ENCODE measurements at regions of chr22 and their contacts with region 1.

Region 1: GRCh38 chr22:40950962-40951794 is at the start of gene RBX1:
- DNase-seq: peak; percentile 98 to 100
- ATAC-seq: peak; percentile 81 to 94 (median 81)
- H3K4me3 ChIP-seq: peak within 1 kb of the TSS; percentile 98
- H3K4me3 Mint-ChIP-seq: peak within 1 kb of the TSS; percentile 99
- H3K27ac ChIP-seq: peak within 1 kb of the TSS; percentile 99
- H3K27ac Mint-ChIP-seq: peak within 1 kb of the TSS; percentile 98 to 100
- H3K4me1 ChIP-seq: peaks cover 23% of the 10 kb centered on the region
- H3K4me1 Mint-ChIP-seq: peaks cover 22 to 31% of the 10 kb centered on the region in 2 donors
- H3K27me3 ChIP-seq: no peaks in the 10 kb centered on the region
- H3K27me3 Mint-ChIP-seq: no peaks in the 10 kb centered on the region
- CTCF ChIP-seq: no peak
- total RNA-seq, gene RBX1: 27.1 to 34.3 (median 28.5) TPM

Region 2: GRCh38 chr22:40862537-40862936 is 88.6 kb before region 1 on chr22:
- intact Hi-C with region 1: no loop called
- DNase-seq: no peak
- ATAC-seq: no peak
- H3K4me3 ChIP-seq: no peak overlapping the region
- H3K4me3 Mint-ChIP-seq: no peak overlapping the region
- H3K27ac ChIP-seq: no peak overlapping the region
- H3K27ac Mint-ChIP-seq: no peak overlapping the region
- H3K4me1 ChIP-seq: peaks cover 4% of the 10 kb centered on the region
- H3K4me1 Mint-ChIP-seq: peaks cover 2 to 7% of the 10 kb centered on the region in 2 donors
- H3K27me3 ChIP-seq: no peaks in the 10 kb centered on the region
- H3K27me3 Mint-ChIP-seq: no peaks in the 10 kb centered on the region
- CTCF ChIP-seq: no peak

Region 3: DNA sequence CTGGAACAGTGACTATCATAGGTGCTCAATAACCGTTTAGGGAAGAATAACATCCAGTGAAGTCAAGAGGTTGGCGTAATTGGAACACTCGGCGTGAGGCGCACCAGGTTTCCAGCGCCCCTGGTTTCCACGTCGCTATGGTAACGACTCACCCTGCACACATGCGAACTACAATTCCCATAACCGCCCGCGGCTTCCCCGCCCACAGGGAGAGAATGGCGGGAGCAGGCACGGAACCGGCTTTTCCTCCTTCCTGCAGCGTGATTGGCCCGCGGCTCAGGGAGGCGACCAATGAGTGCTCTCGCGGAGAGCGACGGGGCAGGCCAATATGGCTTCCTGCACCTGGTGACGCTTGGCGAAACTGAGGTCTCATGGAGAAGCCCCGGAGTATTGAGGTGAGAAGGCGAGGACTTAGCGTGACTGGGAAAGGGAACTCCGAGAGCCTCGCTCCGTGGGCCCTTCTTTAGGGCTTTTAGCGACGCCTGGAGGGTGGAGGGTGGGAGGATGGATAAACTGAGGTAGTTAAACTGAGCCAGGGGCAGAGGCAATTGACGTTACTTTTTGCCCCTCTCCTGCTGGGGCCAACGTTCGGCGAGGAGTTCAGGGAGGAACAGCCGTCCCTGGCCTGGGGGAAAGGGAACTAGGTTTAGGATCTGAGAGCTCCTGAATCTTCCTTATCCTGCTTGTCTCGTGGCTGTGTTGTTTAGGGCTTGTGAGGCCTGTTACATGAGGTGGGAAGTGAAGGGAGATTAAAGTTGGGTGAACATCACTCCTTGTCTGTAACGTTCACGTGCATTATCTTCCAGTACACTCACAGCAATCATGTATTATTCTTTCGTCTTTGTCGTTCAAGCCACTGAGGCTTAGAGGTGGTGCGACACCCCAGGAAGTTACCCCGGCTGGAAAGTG is 254.1 kb after region 1 on chr22 and contains the start of gene L3MBTL2:
- intact Hi-C with region 1: loop called (anchors 2 kb)
- DNase-seq: peak; percentile 94 to 99
- ATAC-seq: peak; percentile 99 to 100 (median 100)
- H3K4me3 ChIP-seq: peak within 1 kb of the TSS; percentile 73
- H3K4me3 Mint-ChIP-seq: peak within 1 kb of the TSS; percentile 97
- H3K27ac ChIP-seq: peak within 1 kb of the TSS; percentile 56
- H3K27ac Mint-ChIP-seq: peak within 1 kb of the TSS; percentile 88 to 92
- H3K4me1 ChIP-seq: peaks cover 17% of the 10 kb centered on the region
- H3K4me1 Mint-ChIP-seq: peaks cover 14 to 20% of the 10 kb centered on the region in 2 donors
- H3K27me3 ChIP-seq: no peaks in the 10 kb centered on the region
- H3K27me3 Mint-ChIP-seq: peaks cover 0 to 9% of the 10 kb centered on the region in 2 donors
- CTCF ChIP-seq: no peak
- total RNA-seq, gene L3MBTL2: 25.2 to 32.1 (median 31.7) TPM

Measured in natural killer cell (primary cell).